ENCODE measurements at regions of chr1 and their contacts with region 1.

Region 1: DNA sequence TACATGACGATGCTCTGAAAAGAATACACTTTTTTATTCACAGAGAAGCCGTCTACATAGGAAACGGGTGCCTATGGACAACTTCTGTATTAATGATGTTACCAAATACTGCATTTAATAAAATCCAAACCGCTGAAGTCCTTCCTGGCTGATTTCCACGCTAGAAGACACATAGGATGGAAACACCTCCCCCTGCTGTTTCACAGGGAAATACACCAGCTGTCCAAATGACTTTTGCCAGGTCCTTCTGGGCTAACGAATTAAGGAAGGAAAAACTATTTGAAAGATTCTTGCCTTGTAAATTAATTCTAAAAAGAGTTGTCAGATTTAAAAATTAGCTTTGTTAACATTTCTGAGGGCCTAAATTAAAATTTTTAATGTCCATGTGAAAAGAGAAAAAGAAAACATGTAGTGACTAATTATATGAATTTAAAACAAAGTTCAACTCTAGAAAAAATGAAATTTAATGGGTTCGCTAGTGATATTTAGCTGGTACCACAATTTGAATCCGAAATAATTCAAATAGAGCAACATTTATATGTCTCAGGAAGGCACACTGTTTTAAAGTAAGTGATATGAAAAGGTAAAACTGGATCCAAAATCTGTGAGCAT is 146.0 kb downstream of the RERE start:
- DNase-seq: peak; percentile 73
- ATAC-seq: no peak
- H3K4me3 ChIP-seq: no peak overlapping the region
- H3K4me3 Mint-ChIP-seq: no peak overlapping the region
- H3K27ac ChIP-seq: no peak overlapping the region
- H3K27ac Mint-ChIP-seq: no peak overlapping the region
- H3K4me1 ChIP-seq: peaks cover 48 to 59% of the 10 kb centered on the region in 2 donors
- H3K4me1 Mint-ChIP-seq: peaks cover 66% of the 10 kb centered on the region
- H3K27me3 ChIP-seq: no peaks in the 10 kb centered on the region
- H3K27me3 Mint-ChIP-seq: no peaks in the 10 kb centered on the region
- CTCF ChIP-seq: peak; percentile 92

Region 2: DNA sequence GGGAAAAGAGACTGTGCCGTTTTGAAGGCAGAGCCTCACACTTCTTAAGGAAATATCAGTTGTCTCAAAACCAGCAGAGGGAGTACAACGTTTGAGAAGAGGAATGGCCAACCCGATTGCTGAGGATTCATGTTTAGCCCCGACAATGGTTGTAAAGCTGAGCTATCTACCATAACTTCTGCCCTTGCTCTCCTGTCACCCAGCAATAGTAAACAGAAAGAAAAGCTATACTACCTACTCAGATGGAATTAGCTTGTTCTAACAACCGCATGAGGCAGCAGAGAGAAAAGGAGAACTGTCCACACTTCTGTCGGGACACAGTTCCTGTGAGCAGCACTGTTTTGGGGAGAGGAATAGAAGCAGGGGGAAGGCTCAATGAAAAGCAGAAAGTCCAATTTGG is 262.3 kb before region 1 on chr1:
- CTCF ChIA-PET with region 1: interaction called, 10 read pairs
- POLR2A ChIA-PET with region 1: no interaction called
- intact Hi-C with region 1: no loop called
- DNase-seq: peak; percentile 63
- ATAC-seq: peak; percentile 87
- H3K4me3 ChIP-seq: no peak overlapping the region
- H3K4me3 Mint-ChIP-seq: peak overlapping the region; percentile 11
- H3K27ac ChIP-seq: peak overlapping the region; percentile 6 to 51
- H3K27ac Mint-ChIP-seq: peak overlapping the region; percentile 27
- H3K4me1 ChIP-seq: peaks cover 11 to 21% of the 10 kb centered on the region in 2 donors
- H3K4me1 Mint-ChIP-seq: peaks cover 38% of the 10 kb centered on the region
- H3K27me3 ChIP-seq: no peaks in the 10 kb centered on the region
- H3K27me3 Mint-ChIP-seq: no peaks in the 10 kb centered on the region
- CTCF ChIP-seq: peak; percentile 71

Region 3: GRCh38 chr1:8571200-8571984 is 100.0 kb before region 1 on chr1:
- CTCF ChIA-PET with region 1: interaction called, 28 read pairs
- POLR2A ChIA-PET with region 1: no interaction called
- intact Hi-C with region 1: no loop called
- DNase-seq: peak; percentile 20
- ATAC-seq: no peak
- H3K4me3 ChIP-seq: no peak overlapping the region
- H3K4me3 Mint-ChIP-seq: no peak overlapping the region
- H3K27ac ChIP-seq: no peak overlapping the region
- H3K27ac Mint-ChIP-seq: no peak overlapping the region
- H3K4me1 ChIP-seq: peaks cover 0 to 7% of the 10 kb centered on the region in 2 donors
- H3K4me1 Mint-ChIP-seq: peaks cover 13% of the 10 kb centered on the region
- H3K27me3 ChIP-seq: no peaks in the 10 kb centered on the region
- H3K27me3 Mint-ChIP-seq: no peaks in the 10 kb centered on the region
- CTCF ChIP-seq: peak; percentile 38

Region 4: DNA sequence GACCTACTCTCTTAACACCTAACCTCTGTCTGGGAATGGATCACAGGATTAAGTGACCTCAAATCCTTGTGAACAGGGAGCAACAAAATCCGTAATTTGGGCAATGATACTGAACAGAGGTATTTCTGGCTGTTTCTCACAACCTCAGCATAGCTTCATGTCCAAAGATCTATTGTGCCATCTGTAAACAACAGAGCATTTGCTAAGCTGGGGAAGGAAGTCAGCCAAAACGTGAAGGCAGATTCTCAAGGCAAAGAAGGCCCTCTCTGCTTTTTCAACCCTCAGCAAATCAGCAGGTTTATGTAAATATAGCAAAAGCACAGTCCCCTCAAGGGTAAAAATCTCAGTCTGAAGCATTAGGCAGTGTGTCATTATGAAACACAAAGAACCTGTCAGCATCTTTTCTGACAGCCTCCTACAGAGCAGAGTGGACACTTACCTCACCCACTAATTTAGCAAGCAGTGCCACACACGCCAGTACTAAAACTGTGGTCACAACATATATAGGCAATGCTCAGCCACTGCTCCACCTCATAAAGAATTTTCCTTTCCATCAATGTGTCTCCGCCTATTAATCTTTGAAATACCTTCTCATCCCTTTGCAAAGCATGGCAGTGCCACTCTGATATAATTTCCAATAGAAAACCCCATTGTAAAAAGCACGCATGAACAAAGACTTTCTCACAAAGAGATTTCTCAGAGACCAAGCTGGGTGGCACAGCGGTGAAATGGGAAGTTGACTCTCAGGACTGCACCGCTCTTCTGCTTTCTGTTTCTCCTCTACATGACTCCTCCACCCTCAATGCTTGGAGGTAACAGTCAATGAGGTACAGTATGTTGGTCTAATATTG is 41.9 kb before region 1 on chr1:
- CTCF ChIA-PET with region 1: interaction called, 26 read pairs
- POLR2A ChIA-PET with region 1: no interaction called
- intact Hi-C with region 1: loop called (anchors 2 kb)
- DNase-seq: peak; percentile 77
- ATAC-seq: peak; percentile 85
- H3K4me3 ChIP-seq: peak overlapping the region in 3 of 5 experiments; percentile 6 to 22 (median 9)
- H3K4me3 Mint-ChIP-seq: peak overlapping the region; percentile 72
- H3K27ac ChIP-seq: peak overlapping the region; percentile 71 to 95
- H3K27ac Mint-ChIP-seq: peak overlapping the region; percentile 87
- H3K4me1 ChIP-seq: peaks cover 73 to 95% of the 10 kb centered on the region in 2 donors
- H3K4me1 Mint-ChIP-seq: peaks cover 84% of the 10 kb centered on the region
- H3K27me3 ChIP-seq: no peaks in the 10 kb centered on the region
- H3K27me3 Mint-ChIP-seq: no peaks in the 10 kb centered on the region
- CTCF ChIP-seq: no peak

Region 5: GRCh38 chr1:8660411-8660828 is 11.0 kb before region 1 on chr1:
- CTCF ChIA-PET with region 1: interaction called, 30 read pairs
- POLR2A ChIA-PET with region 1: interaction called, 3 read pairs
- intact Hi-C with region 1: no loop called
- DNase-seq: peak; percentile 43
- ATAC-seq: peak; percentile 22
- H3K4me3 ChIP-seq: peak overlapping the region in 2 of 5 experiments; percentile 22 to 46
- H3K4me3 Mint-ChIP-seq: no peak overlapping the region
- H3K27ac ChIP-seq: peak overlapping the region; percentile 66 to 69
- H3K27ac Mint-ChIP-seq: no peak overlapping the region
- H3K4me1 ChIP-seq: peaks cover 70 to 76% of the 10 kb centered on the region in 2 donors
- H3K4me1 Mint-ChIP-seq: peaks cover 32% of the 10 kb centered on the region
- H3K27me3 ChIP-seq: no peaks in the 10 kb centered on the region
- H3K27me3 Mint-ChIP-seq: no peaks in the 10 kb centered on the region
- CTCF ChIP-seq: no peak

Region 6: DNA sequence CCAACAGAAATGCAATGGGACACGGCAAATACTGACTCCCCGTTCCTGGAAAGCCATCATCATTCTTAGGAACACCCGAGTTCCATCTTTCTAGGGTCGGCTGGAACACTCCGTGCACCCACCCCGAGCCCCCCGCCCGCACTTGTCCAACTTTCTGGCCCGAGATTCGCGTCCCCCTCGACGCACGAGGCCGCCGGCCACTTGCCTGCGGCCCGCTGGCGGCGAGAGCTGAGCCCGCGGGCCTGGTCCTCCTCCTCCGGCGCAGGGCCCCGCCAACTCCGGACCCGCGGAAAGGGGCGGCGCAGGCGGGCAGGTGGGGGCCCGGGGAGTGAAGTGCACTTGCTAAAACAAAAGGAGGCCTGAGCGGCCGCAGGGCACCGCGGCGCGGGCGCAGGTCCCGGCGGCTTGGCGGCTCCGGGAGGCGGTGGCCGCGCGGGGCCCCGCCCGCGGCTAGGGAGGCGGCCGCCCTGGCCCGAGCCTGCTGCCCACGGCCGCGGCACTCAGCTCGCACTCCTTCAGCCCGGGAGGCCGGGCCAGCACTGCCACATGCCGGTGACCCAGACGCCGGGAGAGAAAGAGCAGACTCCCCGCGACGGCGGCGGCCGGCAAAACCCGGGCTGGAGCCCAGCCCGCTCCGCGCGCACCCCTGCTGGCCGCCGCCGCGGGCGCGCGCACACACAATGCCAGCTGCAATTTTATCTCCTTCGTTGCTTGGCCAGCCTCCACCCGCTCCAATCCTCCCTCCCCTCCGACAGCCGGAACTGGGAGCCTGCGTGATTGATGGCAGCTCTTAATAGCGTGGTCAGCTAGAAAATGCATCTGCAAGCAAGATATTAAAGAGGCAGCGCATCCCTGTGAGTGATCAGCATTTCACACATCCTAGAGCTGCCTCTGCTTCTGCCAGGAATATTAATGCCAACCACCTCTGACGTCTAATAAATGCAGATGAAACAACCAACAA is 31.7 kb after region 1 on chr1:
- CTCF ChIA-PET with region 1: interaction called, 35 read pairs
- POLR2A ChIA-PET with region 1: no interaction called
- intact Hi-C with region 1: loop called (anchors 2 kb)
- DNase-seq: peak; percentile 88
- ATAC-seq: peak; percentile 72
- H3K4me3 ChIP-seq: peak overlapping the region; percentile 60 to 81 (median 63)
- H3K4me3 Mint-ChIP-seq: peak overlapping the region; percentile 93
- H3K27ac ChIP-seq: peak overlapping the region; percentile 54 to 77
- H3K27ac Mint-ChIP-seq: peak overlapping the region; percentile 93
- H3K4me1 ChIP-seq: peaks cover 32 to 39% of the 10 kb centered on the region in 2 donors
- H3K4me1 Mint-ChIP-seq: peaks cover 61% of the 10 kb centered on the region
- H3K27me3 ChIP-seq: no peaks in the 10 kb centered on the region
- H3K27me3 Mint-ChIP-seq: no peaks in the 10 kb centered on the region
- CTCF ChIP-seq: no peak

Region 7: DNA sequence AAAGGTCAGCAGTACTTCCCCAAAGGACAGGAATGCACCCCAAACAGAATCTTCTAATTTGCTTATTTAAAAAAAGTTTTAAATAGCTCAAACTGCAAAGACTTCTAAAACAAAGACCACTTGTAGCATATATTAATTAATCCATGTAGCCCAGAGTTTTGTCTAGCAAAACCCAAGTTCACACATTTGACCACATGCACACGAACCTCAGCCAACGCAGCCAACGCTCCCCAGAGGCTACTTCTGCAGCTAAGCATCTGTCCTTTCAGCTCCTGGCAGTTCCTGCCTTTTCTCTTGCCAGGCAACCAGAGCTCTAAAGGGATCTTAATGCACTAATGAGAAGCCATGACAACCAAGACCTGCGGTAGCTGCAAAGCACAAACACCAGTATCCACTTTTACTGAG is 56.4 kb after region 1 on chr1:
- CTCF ChIA-PET with region 1: interaction called, 43 read pairs
- POLR2A ChIA-PET with region 1: no interaction called
- intact Hi-C with region 1: loop called (anchors 1 kb)
- DNase-seq: no peak
- ATAC-seq: no peak
- H3K4me3 ChIP-seq: no peak overlapping the region
- H3K4me3 Mint-ChIP-seq: no peak overlapping the region
- H3K27ac ChIP-seq: no peak overlapping the region
- H3K27ac Mint-ChIP-seq: no peak overlapping the region
- H3K4me1 ChIP-seq: peaks cover 10 to 13% of the 10 kb centered on the region in 2 donors
- H3K4me1 Mint-ChIP-seq: peaks cover 24% of the 10 kb centered on the region
- H3K27me3 ChIP-seq: no peaks in the 10 kb centered on the region
- H3K27me3 Mint-ChIP-seq: no peaks in the 10 kb centered on the region
- CTCF ChIP-seq: no peak